ENCODE measurements at regions of chr9 and their contacts with region 1.

Region 1: DNA sequence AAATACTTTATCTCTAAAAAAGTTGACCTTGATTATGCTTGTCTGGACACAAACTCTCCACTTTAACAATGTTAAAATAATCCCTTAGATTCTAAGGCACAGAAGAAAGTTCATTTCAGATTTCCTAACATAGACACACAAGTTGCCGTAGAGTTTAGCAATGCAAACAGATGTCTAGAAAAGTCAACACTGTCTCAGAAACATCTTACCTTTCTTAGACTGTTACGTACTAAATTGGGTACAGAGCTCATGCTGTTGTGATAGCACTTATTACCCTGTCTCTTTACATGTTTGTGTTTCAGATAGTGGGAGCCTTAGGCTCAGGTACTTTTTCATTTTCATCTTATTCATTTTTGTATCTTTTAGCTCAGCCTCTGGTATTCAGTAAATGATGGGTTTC is 52.0 kb downstream of the C5 start:
- DNase-seq: no peak
- H3K4me3 ChIP-seq: no peak overlapping the region
- H3K27ac ChIP-seq: no peak overlapping the region
- H3K4me1 ChIP-seq: no peaks in the 10 kb centered on the region
- H3K27me3 ChIP-seq: no peaks in the 10 kb centered on the region
- CTCF ChIP-seq: no peak

Region 2: GRCh38 chr9:120830151-120830550 is 168.0 kb before region 1 on chr9:
- CTCF ChIA-PET with region 1: no interaction called
- POLR2A ChIA-PET with region 1: interaction called, 12 read pairs
- intact Hi-C with region 1: no loop called
- DNase-seq: no peak
- H3K4me3 ChIP-seq: no peak overlapping the region
- H3K27ac ChIP-seq: no peak overlapping the region
- H3K4me1 ChIP-seq: no peaks in the 10 kb centered on the region
- H3K27me3 ChIP-seq: no peaks in the 10 kb centered on the region
- CTCF ChIP-seq: no peak

Region 3: DNA sequence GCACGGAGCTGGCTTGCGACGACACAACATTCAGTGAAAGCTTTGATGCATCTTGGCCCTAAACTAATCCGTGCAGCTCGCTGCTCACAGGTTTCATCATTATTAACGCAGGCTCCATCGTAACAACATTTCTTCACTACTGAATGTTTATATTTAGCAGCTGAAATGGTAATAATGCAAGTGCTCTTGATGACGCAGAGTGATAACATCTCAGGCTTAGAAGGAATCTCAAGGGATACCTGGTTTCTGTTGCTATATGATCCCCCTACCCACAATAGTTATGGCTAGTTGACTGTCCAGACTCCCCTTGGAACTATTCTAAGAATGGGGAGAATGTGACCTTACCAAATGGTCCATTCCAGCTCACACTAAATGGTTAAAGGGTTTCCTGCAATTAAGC is 15.8 kb after region 1 on chr9:
- CTCF ChIA-PET with region 1: interaction called, 3 read pairs
- POLR2A ChIA-PET with region 1: no interaction called
- intact Hi-C with region 1: loop called (anchors 2 kb)
- DNase-seq: no peak
- H3K4me3 ChIP-seq: no peak overlapping the region
- H3K27ac ChIP-seq: no peak overlapping the region
- H3K4me1 ChIP-seq: no peaks in the 10 kb centered on the region
- H3K27me3 ChIP-seq: no peaks in the 10 kb centered on the region
- CTCF ChIP-seq: no peak

Region 4: DNA sequence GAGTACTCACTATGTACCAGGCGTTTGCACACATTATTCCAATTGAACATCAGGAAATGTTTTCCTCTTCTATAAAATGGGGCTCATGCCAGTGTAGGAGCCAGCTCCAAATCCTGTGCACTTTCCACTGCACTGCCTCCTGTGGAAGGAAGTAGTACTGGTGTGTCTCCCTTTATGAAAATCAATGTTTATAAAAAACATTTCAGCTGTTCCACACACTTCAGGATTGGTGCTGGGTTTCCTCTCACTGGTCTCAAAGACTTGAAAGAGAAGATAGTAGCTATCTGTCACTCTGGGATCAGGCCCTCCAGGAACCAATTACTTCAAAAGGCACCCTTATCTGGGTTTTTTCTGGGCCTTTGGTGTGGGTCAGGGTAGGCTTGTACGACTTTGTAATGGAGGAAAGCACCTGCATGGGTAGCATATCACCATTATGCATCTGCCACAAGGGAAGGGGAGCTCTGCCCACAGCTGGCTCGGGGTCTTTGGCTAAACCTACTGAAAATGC is 171.0 kb after region 1 on chr9:
- CTCF ChIA-PET with region 1: no interaction called
- POLR2A ChIA-PET with region 1: no interaction called
- intact Hi-C with region 1: no loop called
- DNase-seq: no peak
- H3K4me3 ChIP-seq: no peak overlapping the region
- H3K27ac ChIP-seq: no peak overlapping the region
- H3K4me1 ChIP-seq: no peaks in the 10 kb centered on the region
- H3K27me3 ChIP-seq: no peaks in the 10 kb centered on the region
- CTCF ChIP-seq: peak; percentile 57

Measured in PC-9 (cell line).